Activated naive CD4-positive, alpha-beta T cell treated with anti-CD3 and anti-CD28 coated beads for 36 hours (primary cell): ENCODE measurements at regions of chr13 and their contacts with region 1.

Region 1: DNA sequence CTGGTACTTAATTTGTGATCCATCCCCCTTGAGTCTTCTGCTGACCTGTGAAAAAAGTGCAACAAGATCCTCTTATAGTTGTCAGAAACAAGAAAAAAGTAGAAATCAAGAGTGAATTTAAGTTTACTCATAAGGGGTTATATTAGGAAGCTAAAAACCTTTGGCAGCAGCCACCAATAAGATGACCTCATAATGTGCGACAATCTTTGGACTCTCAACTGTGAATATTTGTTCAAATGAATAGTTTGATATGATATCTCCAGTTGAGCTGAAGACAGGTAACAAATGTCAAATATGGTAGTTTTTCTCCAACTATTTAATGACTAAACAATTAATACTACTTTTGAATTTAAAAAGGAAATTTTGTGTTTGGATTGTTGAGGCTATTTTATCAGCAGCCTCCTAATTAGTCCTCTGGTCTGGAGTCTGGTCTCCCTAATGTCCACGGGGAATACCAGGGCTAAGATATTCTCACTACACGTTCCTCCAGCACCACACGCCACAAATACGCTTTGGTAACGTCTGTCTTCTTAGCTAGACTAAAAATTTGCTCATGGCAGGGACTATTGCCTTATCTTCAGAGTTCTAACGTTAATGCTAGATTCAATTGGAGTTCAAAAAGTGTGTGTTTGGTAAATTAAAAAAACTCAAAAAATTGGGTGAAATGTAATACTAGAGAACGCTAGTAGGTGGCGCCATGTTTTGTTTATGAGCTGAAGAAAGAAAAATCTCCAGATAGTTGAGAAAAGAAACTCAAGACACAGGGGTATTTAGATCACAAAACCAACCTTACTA is 51.0 kb upstream of the PDX1 start:
- DNase-seq: no peak
- H3K4me3 Mint-ChIP-seq: no peak overlapping the region
- H3K27ac Mint-ChIP-seq: no peak overlapping the region
- H3K4me1 Mint-ChIP-seq: no peaks in the 10 kb centered on the region
- H3K27me3 Mint-ChIP-seq: peaks cover 24% of the 10 kb centered on the region

Region 2: GRCh38 chr13:27953676-27954405 is 85.0 kb after region 1 on chr13:
- CTCF ChIA-PET with region 1: interaction called, 29 read pairs
- intact Hi-C with region 1: loop called (anchors 1 kb)
- DNase-seq: peak; percentile 71
- H3K4me3 Mint-ChIP-seq: peak overlapping the region; percentile 69
- H3K27ac Mint-ChIP-seq: no peak overlapping the region
- H3K4me1 Mint-ChIP-seq: peaks cover 8% of the 10 kb centered on the region
- H3K27me3 Mint-ChIP-seq: peaks cover 60% of the 10 kb centered on the region

Region 3: GRCh38 chr13:27977476-27978300 is 108.8 kb after region 1 on chr13:
- CTCF ChIA-PET with region 1: interaction called, 24 read pairs
- intact Hi-C with region 1: no loop called
- DNase-seq: no peak
- H3K4me3 Mint-ChIP-seq: peak overlapping the region; percentile 30
- H3K27ac Mint-ChIP-seq: no peak overlapping the region
- H3K4me1 Mint-ChIP-seq: peaks cover 27% of the 10 kb centered on the region
- H3K27me3 Mint-ChIP-seq: peaks cover 76% of the 10 kb centered on the region